Activated CD4-positive, alpha-beta memory T cell treated with anti-CD3 and anti-CD28 coated beads for 36 hours (primary cell): ENCODE measurements at regions of chr6 and their contacts with region 1.

Region 1: DNA sequence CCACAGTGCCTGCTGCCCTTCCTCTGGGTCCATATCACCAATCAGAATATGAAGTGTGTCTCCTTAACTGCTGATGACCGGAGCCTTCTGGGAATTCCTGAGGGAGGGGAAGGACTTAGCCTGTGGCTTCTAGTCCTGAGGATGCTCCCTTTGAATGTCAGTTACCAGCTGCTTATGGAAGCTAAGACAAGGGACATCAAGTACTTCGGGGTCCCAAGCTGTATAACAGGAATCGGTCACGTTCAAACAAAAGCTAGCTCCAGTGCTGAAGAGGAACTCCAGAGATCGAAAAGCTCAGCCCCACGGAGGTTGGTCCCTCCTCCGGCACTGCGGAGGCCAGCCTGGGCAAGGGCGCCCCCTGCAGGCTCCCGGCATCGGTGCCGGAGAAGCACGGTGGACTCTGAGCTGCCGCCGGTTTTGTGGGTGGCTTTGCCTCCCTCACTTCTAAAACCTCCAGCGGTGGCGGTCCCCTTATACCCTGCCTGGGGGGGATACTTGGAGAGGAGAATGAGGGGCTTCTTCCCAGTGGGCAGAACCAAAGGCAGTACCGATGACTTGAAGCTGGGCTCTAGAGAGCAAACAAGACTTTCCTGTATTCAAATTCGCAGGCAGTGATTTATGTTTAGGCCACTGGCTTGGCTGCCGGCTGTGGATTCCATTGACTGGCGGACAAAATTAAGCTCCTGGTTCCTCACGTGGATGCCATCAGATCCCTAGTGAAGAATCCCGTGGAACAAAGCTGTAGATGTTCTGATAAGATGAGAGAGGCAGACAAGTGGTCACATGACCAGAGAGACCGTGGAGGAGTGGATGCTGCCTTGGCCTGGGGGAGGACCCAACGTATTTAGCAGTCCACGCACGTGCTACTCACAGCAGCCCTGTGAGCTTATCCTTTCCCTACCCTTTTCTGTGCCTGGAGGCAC is 16.2 kb upstream of the UBR2 start:
- DNase-seq: peak; percentile 92
- H3K4me3 Mint-ChIP-seq: peak overlapping the region; percentile 62
- H3K27ac Mint-ChIP-seq: no peak overlapping the region
- H3K4me1 Mint-ChIP-seq: peaks cover 23% of the 10 kb centered on the region
- H3K27me3 Mint-ChIP-seq: peaks cover 4% of the 10 kb centered on the region

Region 2: DNA sequence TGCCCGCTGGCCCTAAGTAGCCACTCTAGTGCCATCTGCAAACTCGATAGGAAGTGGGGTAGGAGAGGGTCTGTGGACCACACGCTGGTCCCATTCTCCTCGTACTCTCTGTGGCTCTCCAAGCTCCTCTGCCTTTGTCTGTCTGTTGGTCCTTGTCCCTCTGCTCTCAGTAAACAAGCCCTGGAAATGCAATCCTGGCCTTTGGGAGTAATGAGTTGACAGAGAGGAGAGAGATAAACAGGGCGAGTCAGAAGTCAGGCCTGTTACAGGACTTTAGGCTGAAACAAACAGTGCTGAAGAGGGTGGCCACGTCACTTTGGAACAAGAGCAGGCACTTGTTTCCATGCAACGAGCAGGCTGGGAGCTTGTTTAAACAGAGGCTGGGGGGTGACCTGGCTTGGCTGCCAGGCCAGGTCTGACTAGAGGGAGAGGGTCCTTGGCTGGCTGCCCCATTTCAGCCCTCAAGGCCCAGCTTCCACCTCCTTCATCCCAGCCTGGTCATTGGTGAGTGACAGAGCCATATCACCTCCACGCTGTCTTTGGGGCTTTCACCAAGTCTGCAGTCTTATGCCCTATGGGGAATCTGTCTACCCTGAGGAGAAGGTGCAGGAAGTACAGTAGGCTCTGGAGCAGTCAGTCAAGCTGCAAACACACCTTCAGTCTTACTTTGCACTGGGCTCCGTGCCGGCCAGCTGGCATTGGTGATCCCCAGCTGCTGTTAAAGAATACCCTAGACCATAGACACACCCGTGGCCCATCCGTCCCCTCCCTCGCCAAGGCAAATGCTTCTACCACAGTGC is 978.9 kb before region 1 on chr6:
- CTCF ChIA-PET with region 1: no interaction called
- POLR2A ChIA-PET with region 1: no interaction called
- intact Hi-C with region 1: no loop called
- DNase-seq: no peak
- H3K4me3 Mint-ChIP-seq: no peak overlapping the region
- H3K27ac Mint-ChIP-seq: no peak overlapping the region
- H3K4me1 Mint-ChIP-seq: peaks cover 14% of the 10 kb centered on the region
- H3K27me3 Mint-ChIP-seq: no peaks in the 10 kb centered on the region

Region 3: GRCh38 chr6:42239351-42240055 is 308.2 kb before region 1 on chr6:
- CTCF ChIA-PET with region 1: interaction called, 13 read pairs
- POLR2A ChIA-PET with region 1: no interaction called
- intact Hi-C with region 1: no loop called
- DNase-seq: no peak
- H3K4me3 Mint-ChIP-seq: no peak overlapping the region
- H3K27ac Mint-ChIP-seq: peak overlapping the region; percentile 44
- H3K4me1 Mint-ChIP-seq: peaks cover 17% of the 10 kb centered on the region
- H3K27me3 Mint-ChIP-seq: no peaks in the 10 kb centered on the region

Region 4: DNA sequence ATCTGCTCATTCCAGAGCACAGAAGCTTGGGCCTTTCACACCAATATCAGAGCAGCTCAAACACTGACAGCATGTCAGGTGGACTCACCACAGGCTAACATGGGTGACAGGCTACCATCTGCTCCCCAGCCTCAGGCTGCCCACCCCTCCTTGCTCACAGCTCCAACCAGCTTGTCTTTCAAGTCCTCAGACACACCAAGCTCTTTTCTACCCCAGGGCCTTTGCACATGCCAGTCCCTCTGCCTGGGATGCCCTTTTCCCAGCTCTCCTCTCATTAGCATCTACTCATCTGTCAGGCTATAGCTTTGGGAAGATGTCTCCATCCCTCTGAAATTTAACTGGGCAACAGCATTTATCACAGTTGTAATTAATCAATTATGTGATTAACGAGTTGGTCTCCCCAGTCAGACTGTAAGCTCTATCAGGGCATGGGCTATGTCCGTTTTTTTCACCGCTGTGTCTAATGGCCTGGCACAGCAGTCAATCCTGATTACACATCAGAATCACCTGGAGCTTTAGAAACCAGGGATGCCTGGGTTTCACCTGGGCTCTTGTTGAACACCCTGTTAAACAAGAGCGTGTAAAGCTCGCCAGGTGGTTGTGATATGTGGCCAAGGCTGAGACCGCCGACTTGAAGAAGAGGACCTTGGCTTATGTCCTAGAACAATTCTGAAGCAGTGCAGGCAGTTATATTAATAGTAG is 241.1 kb before region 1 on chr6:
- CTCF ChIA-PET with region 1: interaction called, 46 read pairs
- POLR2A ChIA-PET with region 1: no interaction called
- intact Hi-C with region 1: no loop called
- DNase-seq: no peak
- H3K4me3 Mint-ChIP-seq: no peak overlapping the region
- H3K27ac Mint-ChIP-seq: no peak overlapping the region
- H3K4me1 Mint-ChIP-seq: peaks cover 7% of the 10 kb centered on the region
- H3K27me3 Mint-ChIP-seq: no peaks in the 10 kb centered on the region

Region 5: GRCh38 chr6:42367353-42368011 is 180.2 kb before region 1 on chr6:
- CTCF ChIA-PET with region 1: interaction called, 24 read pairs
- POLR2A ChIA-PET with region 1: no interaction called
- intact Hi-C with region 1: no loop called
- DNase-seq: peak; percentile 48
- H3K4me3 Mint-ChIP-seq: peak overlapping the region; percentile 67
- H3K27ac Mint-ChIP-seq: peak overlapping the region; percentile 92
- H3K4me1 Mint-ChIP-seq: peaks cover 73% of the 10 kb centered on the region
- H3K27me3 Mint-ChIP-seq: no peaks in the 10 kb centered on the region

Region 6: DNA sequence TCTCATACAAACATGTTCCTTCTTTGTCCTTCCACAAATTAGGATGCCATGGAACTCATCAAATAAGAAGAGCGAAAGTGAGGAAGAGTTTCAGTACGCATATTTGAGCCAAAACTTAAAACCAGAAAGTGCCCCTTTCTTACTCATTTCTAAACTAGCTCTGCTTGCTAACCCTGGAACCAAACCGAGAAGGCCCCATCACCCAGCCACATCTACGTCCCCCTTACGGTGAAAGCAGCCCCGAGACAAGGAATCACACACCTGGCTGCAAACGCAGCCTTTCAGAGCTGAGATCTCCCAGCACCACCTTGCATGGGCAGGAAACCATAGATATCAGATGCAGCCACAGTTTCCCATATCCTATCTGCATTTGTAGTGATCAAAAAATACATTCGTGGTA is 124.4 kb before region 1 on chr6:
- CTCF ChIA-PET with region 1: interaction called, 12 read pairs
- POLR2A ChIA-PET with region 1: interaction called, 3 read pairs
- intact Hi-C with region 1: no loop called
- DNase-seq: peak; percentile 74
- H3K4me3 Mint-ChIP-seq: peak overlapping the region; percentile 18
- H3K27ac Mint-ChIP-seq: peak overlapping the region; percentile 72
- H3K4me1 Mint-ChIP-seq: peaks cover 57% of the 10 kb centered on the region
- H3K27me3 Mint-ChIP-seq: no peaks in the 10 kb centered on the region

Region 7: GRCh38 chr6:42505377-42505702 is 42.3 kb before region 1 on chr6:
- CTCF ChIA-PET with region 1: interaction called, 14 read pairs
- POLR2A ChIA-PET with region 1: no interaction called
- intact Hi-C with region 1: no loop called
- DNase-seq: no peak
- H3K4me3 Mint-ChIP-seq: no peak overlapping the region
- H3K27ac Mint-ChIP-seq: no peak overlapping the region
- H3K4me1 Mint-ChIP-seq: peaks cover 33% of the 10 kb centered on the region
- H3K27me3 Mint-ChIP-seq: no peaks in the 10 kb centered on the region

Region 8: DNA sequence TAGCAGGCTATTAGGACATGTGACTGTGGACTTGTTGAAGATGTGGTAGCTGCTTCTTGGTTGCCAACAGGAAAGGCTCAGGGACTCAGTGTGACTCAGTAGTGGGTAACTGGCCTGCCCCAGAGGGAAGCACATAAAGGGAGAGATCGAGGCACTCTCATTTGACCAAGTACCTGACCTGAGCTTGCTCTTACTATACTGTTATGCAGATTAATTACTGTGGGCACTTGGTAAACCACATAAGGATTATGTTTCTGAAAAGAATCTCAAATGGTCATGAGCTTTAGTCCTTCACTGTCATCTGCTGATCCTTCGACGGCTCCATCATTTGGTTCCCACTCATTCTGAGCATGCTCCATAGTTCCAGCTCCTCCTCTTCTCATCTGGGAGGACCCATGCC is 283.6 kb after region 1 on chr6:
- CTCF ChIA-PET with region 1: no interaction called
- POLR2A ChIA-PET with region 1: no interaction called
- intact Hi-C with region 1: no loop called
- DNase-seq: no peak
- H3K4me3 Mint-ChIP-seq: no peak overlapping the region
- H3K27ac Mint-ChIP-seq: no peak overlapping the region
- H3K4me1 Mint-ChIP-seq: peaks cover 10% of the 10 kb centered on the region
- H3K27me3 Mint-ChIP-seq: no peaks in the 10 kb centered on the region